ENCODE measurements at regions of chr17 and their contacts with region 1.

Region 1: GRCh38 chr17:27455914-27456680 is at the start of gene KSR1:
- DNase-seq: peak; percentile 75 to 87 (median 79)
- H3K4me3 ChIP-seq: peak within 1 kb of the TSS; percentile 64
- H3K4me3 Mint-ChIP-seq: peak within 1 kb of the TSS; percentile 84 to 95 (median 91)
- H3K27ac ChIP-seq: peak within 1 kb of the TSS; percentile 72
- H3K27ac Mint-ChIP-seq: peak within 1 kb of the TSS; percentile 49 to 93 (median 90)
- H3K4me1 ChIP-seq: peaks cover 15% of the 10 kb centered on the region
- H3K4me1 Mint-ChIP-seq: peaks cover 25 to 42% (median 37%) of the 10 kb centered on the region in 3 donors
- H3K27me3 ChIP-seq: no peaks in the 10 kb centered on the region
- H3K27me3 Mint-ChIP-seq: peaks cover 0 to 1% of the 10 kb centered on the region in 2 donors
- total RNA-seq, gene KSR1: 26.3 to 26.9 TPM

Region 2: DNA sequence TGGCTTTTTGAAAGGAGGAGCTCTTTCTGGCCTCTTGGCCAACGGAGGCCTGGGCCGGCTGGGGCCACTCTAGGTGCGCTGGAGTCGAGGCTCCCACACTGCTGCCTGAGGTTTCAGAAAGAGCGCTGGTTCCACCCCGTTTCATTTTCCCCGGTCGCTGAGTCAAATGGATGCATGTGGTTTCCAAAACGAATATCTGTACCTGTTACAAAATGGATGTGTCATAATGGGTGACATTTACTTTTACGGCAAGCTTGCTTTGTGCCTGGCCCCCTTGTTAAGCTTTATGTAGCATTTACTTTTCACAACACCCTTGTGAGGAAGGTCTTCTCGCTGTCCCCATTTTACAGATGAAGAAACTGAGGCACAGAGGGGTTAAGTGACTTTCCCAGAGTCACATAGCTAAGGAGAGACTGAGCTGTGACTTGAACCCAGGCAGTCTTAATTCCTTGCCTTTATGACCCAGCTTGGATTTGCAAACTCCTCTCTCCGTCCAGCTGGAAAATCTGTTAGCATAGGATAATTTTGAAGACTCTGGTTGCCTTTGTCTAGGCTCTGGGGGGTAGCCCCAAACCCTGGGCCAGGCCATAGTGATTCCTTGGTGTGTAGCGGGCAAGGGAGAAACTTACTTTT is 10.8 kb after region 1 on chr17:
- CTCF ChIA-PET with region 1: interaction called, 5 read pairs
- POLR2A ChIA-PET with region 1: interaction called, 23 read pairs
- DNase-seq: peak in 4 of 5 donors; percentile 13 to 64 (median 18)
- H3K4me3 ChIP-seq: peak overlapping the region; percentile 42
- H3K4me3 Mint-ChIP-seq: peak overlapping the region; percentile 36 to 91 (median 74)
- H3K27ac ChIP-seq: peak overlapping the region; percentile 39
- H3K27ac Mint-ChIP-seq: peak overlapping the region; percentile 55 to 95 (median 84)
- H3K4me1 ChIP-seq: peaks cover 30% of the 10 kb centered on the region
- H3K4me1 Mint-ChIP-seq: peaks cover 60 to 82% (median 75%) of the 10 kb centered on the region in 3 donors
- H3K27me3 ChIP-seq: no peaks in the 10 kb centered on the region
- H3K27me3 Mint-ChIP-seq: no peaks in the 10 kb centered on the region

Region 3: GRCh38 chr17:27473748-27474609 is 17.9 kb after region 1 on chr17:
- CTCF ChIA-PET with region 1: interaction called, 11 read pairs
- POLR2A ChIA-PET with region 1: interaction called, 23 read pairs
- DNase-seq: peak; percentile 34 to 85 (median 63)
- H3K4me3 ChIP-seq: peak overlapping the region; percentile 9
- H3K4me3 Mint-ChIP-seq: peak overlapping the region; percentile 45 to 82 (median 70)
- H3K27ac ChIP-seq: peak overlapping the region; percentile 63
- H3K27ac Mint-ChIP-seq: peak overlapping the region; percentile 96 to 98 (median 97)
- H3K4me1 ChIP-seq: peaks cover 52% of the 10 kb centered on the region
- H3K4me1 Mint-ChIP-seq: peaks cover 68 to 87% (median 76%) of the 10 kb centered on the region in 3 donors
- H3K27me3 ChIP-seq: no peaks in the 10 kb centered on the region
- H3K27me3 Mint-ChIP-seq: no peaks in the 10 kb centered on the region

Measured in CD8-positive, alpha-beta memory T cell (primary cell).